PC-9 (cell line): ENCODE measurements at regions of chr11 and their contacts with region 1.

Region 1: DNA sequence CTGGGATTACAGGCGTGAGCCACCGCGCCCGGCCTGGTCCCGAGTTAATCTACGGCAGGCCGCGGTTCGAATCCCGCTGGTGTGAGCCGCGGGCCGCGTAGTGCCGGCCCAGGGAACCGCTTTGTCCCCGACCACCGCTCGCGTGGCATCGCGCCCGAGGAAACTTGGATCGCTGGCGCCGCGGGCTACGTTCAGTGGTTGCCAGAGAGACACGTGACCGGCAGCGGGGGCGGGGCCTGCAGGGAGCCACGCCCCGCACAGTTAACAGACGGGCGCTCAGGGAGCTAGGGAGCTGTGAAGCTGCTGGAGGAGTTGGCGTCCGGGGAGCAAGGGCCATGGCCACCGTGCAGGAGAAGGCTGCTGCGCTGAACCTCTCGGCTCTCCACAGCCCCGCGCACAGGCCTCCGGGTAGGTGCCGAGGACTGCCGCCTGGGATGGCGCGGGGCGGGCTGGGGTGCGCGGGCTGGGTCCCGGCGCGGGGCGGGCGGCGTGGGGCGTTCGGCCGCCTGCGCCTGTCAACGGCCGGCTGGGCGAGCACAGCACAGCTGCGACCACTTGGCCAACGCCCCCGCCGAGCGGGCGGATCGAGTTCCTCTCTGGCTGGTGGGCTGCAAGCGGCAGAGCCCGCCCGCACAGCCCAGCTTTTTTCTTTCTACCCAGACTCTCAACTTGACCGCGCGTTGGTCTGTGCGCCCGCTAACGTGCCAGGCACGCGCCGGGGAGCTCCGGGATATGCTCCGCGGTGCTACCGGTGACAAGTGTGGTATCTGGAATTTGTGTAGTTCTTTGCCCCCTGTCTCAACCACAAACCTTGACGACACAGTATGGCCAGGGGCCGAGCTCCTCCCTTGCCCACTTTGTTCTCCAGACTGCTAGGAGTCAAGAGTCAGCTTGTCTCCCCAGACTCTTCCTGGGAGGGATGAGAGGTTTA is at the start of gene DEPDC7:
- DNase-seq: peak; percentile 55 to 88
- H3K4me3 ChIP-seq: peak within 1 kb of the TSS; percentile 57
- H3K27ac ChIP-seq: no peak within 1 kb of the TSS
- H3K4me1 ChIP-seq: peaks cover 11% of the 10 kb centered on the region
- H3K27me3 ChIP-seq: peaks cover 4% of the 10 kb centered on the region; the same call in 1 of the 2 replicates
- CTCF ChIP-seq: no peak
- total RNA-seq, gene DEPDC7: 0.68 and 1.2 TPM in 2 replicates

Region 2: DNA sequence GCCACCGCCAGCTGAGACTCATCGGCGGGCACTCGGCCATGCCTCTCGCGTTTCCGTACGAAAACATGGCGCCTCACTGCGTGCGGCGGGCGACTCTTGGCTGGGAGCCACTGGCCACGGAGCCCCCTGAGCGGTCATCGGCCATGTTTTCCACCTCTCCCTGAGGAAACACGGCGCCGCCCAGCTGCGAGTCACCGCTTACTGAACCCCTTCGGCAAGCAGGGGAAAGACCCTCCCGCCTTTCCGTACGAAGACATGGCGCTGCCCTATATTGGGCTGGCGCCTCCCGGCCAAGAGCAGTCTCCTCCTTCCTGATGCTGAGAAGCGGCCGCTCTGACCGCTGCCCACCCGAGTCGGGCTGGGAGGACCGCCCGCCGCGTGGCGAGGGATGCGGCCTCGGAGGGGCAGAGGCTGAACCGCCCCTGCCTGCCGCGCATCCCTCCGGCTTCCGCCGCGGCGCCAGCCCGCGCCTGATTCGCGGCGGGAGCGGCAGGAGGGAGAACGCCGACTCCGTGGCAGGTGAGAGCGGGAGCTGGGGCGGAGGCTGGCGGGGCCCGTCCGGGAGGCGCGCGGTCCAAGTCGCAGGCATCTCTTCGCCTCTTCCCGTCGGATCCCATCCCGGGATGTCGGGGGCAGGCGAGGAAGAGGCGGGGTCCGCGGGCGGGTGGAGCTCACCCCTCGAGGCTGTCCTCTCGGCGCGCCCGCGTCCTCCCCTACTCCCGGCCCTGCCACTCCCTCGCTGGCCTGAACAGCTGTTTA is 23.6 kb after region 1 on chr11 and contains the start of gene TCP11L1:
- CTCF ChIA-PET with region 1: no interaction called
- POLR2A ChIA-PET with region 1: interaction called, 3 read pairs
- intact Hi-C with region 1: loop called (anchors 2 kb)
- DNase-seq: peak in 1 of 2 experiments; percentile 91
- H3K4me3 ChIP-seq: peak within 1 kb of the TSS; percentile 80
- H3K27ac ChIP-seq: peak within 1 kb of the TSS; percentile 60
- H3K4me1 ChIP-seq: peaks cover 6% of the 10 kb centered on the region
- H3K27me3 ChIP-seq: no peaks in the 10 kb centered on the region
- CTCF ChIP-seq: no peak
- total RNA-seq, gene TCP11L1: 8.1 and 10.3 TPM in 2 replicates

Region 3: DNA sequence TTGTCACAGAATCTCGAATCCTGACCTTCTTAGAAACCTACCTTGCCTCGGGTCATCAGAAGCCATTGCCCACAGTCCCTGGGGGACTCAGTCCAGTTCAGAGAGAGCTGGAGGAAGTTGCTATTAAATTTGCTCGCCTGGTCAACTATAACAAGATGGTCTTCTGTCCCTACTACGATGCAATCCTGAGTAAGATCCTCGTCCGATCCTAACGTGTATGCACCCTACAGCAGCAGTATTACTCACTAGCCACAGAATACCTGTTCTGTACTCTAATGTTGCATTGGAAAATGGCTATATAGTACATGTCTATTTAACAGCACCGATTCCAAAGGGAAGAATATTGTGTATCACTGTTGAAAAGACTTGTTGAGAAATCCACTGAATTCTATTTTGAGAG is 56.6 kb after region 1 on chr11:
- CTCF ChIA-PET with region 1: no interaction called
- POLR2A ChIA-PET with region 1: interaction called, 10 read pairs
- intact Hi-C with region 1: no loop called
- DNase-seq: no peak
- H3K4me3 ChIP-seq: no peak overlapping the region
- H3K27ac ChIP-seq: no peak overlapping the region
- H3K4me1 ChIP-seq: no peaks in the 10 kb centered on the region
- H3K27me3 ChIP-seq: no peaks in the 10 kb centered on the region
- CTCF ChIP-seq: no peak